Activated CD8-positive, alpha-beta T cell treated with anti-CD3 and anti-CD28 coated beads for 36 hours (primary cell): ENCODE measurements at regions of chr5 and their contacts with region 1.

Region 1: GRCh38 chr5:126354012-126354857 is 69.0 kb upstream of the GRAMD2B start:
- DNase-seq: no peak
- ATAC-seq: peak; percentile 75
- H3K4me3 Mint-ChIP-seq: peak overlapping the region; percentile 57
- H3K27ac Mint-ChIP-seq: peak overlapping the region; percentile 47
- H3K4me1 Mint-ChIP-seq: peaks cover 14% of the 10 kb centered on the region
- H3K27me3 Mint-ChIP-seq: no peaks in the 10 kb centered on the region
- CTCF ChIP-seq: peak; percentile 69

Region 2: GRCh38 chr5:126365465-126366200 is 11.4 kb after region 1 on chr5:
- CTCF ChIA-PET with region 1: interaction called, 14 read pairs
- POLR2A ChIA-PET with region 1: no interaction called
- intact Hi-C with region 1: no loop called
- DNase-seq: no peak
- ATAC-seq: no peak
- H3K4me3 Mint-ChIP-seq: no peak overlapping the region
- H3K27ac Mint-ChIP-seq: no peak overlapping the region
- H3K4me1 Mint-ChIP-seq: peaks cover 4% of the 10 kb centered on the region
- H3K27me3 Mint-ChIP-seq: no peaks in the 10 kb centered on the region
- CTCF ChIP-seq: no peak

Region 3: DNA sequence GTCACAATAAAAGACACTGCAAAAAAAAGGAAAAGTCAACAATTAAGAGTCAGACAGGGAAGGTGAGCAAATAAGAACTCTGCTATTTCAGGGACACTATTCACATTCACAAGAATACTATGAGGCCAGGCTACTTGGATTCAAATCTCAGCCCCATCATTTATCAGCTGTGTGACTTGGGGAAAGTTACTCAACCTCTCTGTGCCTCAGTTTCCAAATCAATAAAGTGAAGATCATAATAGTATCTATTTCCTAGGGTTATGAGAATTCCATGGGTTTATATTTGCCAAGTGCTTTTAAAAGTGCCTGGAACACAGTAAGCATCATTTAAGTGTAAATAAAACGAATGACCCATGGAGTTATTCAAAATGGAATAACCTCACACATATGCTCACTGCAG is 184.3 kb after region 1 on chr5:
- CTCF ChIA-PET with region 1: interaction called, 206 read pairs
- POLR2A ChIA-PET with region 1: no interaction called
- intact Hi-C with region 1: loop called (anchors 2 kb)
- DNase-seq: no peak
- ATAC-seq: no peak
- H3K4me3 Mint-ChIP-seq: no peak overlapping the region
- H3K27ac Mint-ChIP-seq: no peak overlapping the region
- H3K4me1 Mint-ChIP-seq: no peaks in the 10 kb centered on the region
- H3K27me3 Mint-ChIP-seq: no peaks in the 10 kb centered on the region
- CTCF ChIP-seq: no peak

Region 4: DNA sequence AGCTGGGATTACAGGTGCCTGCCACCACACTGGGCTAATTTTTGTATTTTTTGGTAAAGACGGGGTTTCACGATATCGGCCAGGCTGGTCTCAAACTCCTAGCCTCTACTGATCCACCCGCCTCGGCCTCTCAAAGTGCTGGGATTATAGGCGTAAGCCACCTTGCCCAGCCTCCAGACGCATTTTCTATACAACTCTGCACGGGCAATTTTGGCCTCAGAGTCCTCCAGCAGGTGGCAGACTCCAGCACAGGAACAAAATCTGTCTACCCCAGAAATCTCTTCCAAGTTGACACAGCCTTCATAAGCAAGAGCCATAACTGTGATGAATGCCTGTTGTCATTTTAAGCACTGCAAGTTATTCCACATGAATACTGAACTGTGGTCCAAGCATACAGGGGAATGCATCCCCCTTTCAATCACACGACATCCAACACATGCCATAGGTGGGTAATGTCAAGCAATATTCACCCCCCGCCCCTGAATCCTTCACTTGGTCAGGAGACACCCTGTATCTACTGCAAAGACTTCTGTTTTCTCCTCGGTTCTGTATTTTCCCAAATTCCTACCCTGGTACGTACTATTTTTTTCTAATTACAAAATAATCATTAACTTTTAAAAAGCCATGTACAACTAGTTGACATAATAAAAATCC is 190.0 kb after region 1 on chr5:
- CTCF ChIA-PET with region 1: interaction called, 206 read pairs
- POLR2A ChIA-PET with region 1: no interaction called
- intact Hi-C with region 1: loop called (anchors 2 kb)
- DNase-seq: peak; percentile 53
- ATAC-seq: peak; percentile 53
- H3K4me3 Mint-ChIP-seq: no peak overlapping the region
- H3K27ac Mint-ChIP-seq: no peak overlapping the region
- H3K4me1 Mint-ChIP-seq: no peaks in the 10 kb centered on the region
- H3K27me3 Mint-ChIP-seq: no peaks in the 10 kb centered on the region
- CTCF ChIP-seq: peak; percentile 49